Prostate gland (tissue), 2 donors: ENCODE measurements at regions of chr12 and their contacts with region 1.

Region 1: DNA sequence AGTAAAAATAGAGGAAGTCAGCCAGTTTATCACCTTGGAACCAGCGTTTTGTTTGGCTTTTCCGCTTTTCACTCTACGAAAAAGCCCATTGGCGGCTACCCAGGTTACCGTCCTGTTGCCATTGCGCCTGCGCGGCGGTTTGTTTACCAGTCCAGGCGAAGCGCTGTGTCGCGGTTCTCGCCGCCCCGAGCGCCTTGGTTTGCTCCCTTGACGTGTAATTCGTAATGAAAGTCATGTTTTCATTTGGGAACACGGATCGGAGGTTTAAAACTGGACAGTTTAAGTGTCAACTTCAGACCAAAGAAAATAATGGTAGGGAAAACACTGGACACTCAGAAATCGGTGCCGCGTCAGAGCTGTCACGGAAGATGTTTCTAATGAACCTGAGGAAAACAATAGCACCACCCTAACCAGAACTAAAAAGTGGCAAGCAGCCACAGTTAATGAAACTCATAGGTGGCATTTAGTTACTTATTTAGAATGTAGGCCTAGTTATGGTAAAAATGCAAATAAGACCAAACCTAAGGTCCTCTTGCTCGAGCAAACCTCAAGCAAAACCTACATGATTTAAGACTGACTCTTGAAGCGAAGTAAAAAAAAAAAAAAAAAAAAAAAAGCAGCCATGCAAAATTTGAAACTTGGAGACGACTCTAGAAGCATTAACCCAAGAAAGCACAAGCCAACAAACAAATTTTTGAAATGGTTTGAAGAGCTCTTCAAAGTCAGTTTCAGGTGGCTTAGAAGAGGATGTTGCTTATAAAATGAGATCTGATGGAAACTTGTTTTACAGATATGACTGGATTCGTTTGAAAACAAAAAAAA is 790 bp upstream of the GPR19 start:
- DNase-seq: peak; percentile 88
- H3K4me3 ChIP-seq: peak overlapping the region; percentile 35 to 52
- H3K27ac ChIP-seq: peak overlapping the region; percentile 94 to 97
- H3K4me1 ChIP-seq: no peaks in the 10 kb centered on the region
- H3K27me3 ChIP-seq: no peaks in the 10 kb centered on the region
- CTCF ChIP-seq: peak in 1 of 4 experiments; percentile 8
- POLR2A ChIP-seq: peak; percentile 76

Region 2: GRCh38 chr12:12032851-12033588 is 663.8 kb before region 1 on chr12:
- intact Hi-C with region 1: loop called (anchors 10 kb)
- DNase-seq: peak; percentile 84
- H3K4me3 ChIP-seq: peak overlapping the region; percentile 7 to 25
- H3K27ac ChIP-seq: peak overlapping the region; percentile 64 to 70
- H3K4me1 ChIP-seq: peaks cover 4% of the 10 kb centered on the region
- H3K27me3 ChIP-seq: no peaks in the 10 kb centered on the region
- CTCF ChIP-seq: peak; percentile 87 to 95 (median 89)
- POLR2A ChIP-seq: peak; percentile 3

Region 3: GRCh38 chr12:12482959-12483358 is 213.8 kb before region 1 on chr12:
- intact Hi-C with region 1: no loop called
- DNase-seq: no peak
- H3K4me3 ChIP-seq: no peak overlapping the region
- H3K27ac ChIP-seq: peak overlapping the region in 1 of 2 donors; percentile 28
- H3K4me1 ChIP-seq: no peaks in the 10 kb centered on the region
- H3K27me3 ChIP-seq: no peaks in the 10 kb centered on the region
- CTCF ChIP-seq: no peak
- POLR2A ChIP-seq: no peak

Region 4: DNA sequence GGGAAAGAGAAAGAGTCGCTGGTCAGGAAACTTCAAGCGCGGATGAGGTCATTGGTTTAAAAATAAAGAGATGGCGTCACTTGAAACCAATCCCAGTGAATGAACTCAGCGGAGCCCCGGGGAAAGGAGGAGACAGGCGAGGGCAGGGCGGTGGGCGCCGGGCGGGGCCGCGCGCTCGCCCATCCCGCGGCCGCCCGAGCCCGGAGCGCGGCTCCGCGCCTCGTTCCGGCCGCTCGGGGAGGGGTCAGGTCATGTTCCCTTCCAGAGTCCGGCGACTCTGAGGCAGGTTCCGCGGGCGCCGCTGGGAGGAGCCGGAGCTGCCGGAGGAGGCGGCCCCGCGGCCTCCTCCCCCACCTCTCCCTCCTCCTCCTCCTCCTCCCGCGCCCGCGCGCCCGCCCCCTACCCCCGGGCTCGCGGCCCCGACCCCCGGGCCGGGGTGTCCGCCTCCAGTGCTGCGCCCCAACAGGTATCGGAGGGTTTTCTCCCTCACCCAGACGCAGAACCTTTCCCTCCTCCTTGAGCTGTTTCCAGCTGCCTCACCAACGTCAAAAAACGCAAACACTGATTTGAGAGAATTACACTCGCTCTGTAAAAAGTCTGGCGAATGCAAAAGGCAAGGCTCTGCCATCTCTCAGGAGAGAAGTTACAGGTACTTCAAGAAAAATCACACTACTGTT is 134.1 kb before region 1 on chr12 and contains the start of gene DUSP16:
- intact Hi-C with region 1: loop called (anchors 5 kb)
- DNase-seq: peak; percentile 93
- H3K4me3 ChIP-seq: peak within 1 kb of the TSS; percentile 73 to 100
- H3K27ac ChIP-seq: peak within 1 kb of the TSS; percentile 99 to 100
- H3K4me1 ChIP-seq: peaks cover 3% of the 10 kb centered on the region
- H3K27me3 ChIP-seq: no peaks in the 10 kb centered on the region
- CTCF ChIP-seq: peak in 3 of 4 experiments; percentile 18 to 57 (median 46)
- POLR2A ChIP-seq: peak; percentile 78
- total RNA-seq, gene DUSP16: 60.8 to 87.0 TPM

Region 5: GRCh38 chr12:12611512-12612306 is 85.1 kb before region 1 on chr12 and contains the start of gene CREBL2:
- intact Hi-C with region 1: loop called (anchors 10 kb)
- DNase-seq: peak; percentile 92
- H3K4me3 ChIP-seq: peak within 1 kb of the TSS; percentile 47 to 58
- H3K27ac ChIP-seq: peak within 1 kb of the TSS; percentile 90 to 94
- H3K4me1 ChIP-seq: no peaks in the 10 kb centered on the region
- H3K27me3 ChIP-seq: no peaks in the 10 kb centered on the region
- CTCF ChIP-seq: peak in 1 of 4 experiments; percentile 14
- POLR2A ChIP-seq: peak; percentile 55
- total RNA-seq, gene CREBL2: 48.1 to 59.8 TPM

Region 6: GRCh38 chr12:12645485-12645884 is 51.3 kb before region 1 on chr12:
- intact Hi-C with region 1: loop called (anchors 5 kb)
- DNase-seq: no peak
- H3K4me3 ChIP-seq: no peak overlapping the region
- H3K27ac ChIP-seq: no peak overlapping the region
- H3K4me1 ChIP-seq: no peaks in the 10 kb centered on the region
- H3K27me3 ChIP-seq: no peaks in the 10 kb centered on the region
- CTCF ChIP-seq: peak in 2 of 4 experiments; percentile 11 to 29
- POLR2A ChIP-seq: no peak

Region 7: DNA sequence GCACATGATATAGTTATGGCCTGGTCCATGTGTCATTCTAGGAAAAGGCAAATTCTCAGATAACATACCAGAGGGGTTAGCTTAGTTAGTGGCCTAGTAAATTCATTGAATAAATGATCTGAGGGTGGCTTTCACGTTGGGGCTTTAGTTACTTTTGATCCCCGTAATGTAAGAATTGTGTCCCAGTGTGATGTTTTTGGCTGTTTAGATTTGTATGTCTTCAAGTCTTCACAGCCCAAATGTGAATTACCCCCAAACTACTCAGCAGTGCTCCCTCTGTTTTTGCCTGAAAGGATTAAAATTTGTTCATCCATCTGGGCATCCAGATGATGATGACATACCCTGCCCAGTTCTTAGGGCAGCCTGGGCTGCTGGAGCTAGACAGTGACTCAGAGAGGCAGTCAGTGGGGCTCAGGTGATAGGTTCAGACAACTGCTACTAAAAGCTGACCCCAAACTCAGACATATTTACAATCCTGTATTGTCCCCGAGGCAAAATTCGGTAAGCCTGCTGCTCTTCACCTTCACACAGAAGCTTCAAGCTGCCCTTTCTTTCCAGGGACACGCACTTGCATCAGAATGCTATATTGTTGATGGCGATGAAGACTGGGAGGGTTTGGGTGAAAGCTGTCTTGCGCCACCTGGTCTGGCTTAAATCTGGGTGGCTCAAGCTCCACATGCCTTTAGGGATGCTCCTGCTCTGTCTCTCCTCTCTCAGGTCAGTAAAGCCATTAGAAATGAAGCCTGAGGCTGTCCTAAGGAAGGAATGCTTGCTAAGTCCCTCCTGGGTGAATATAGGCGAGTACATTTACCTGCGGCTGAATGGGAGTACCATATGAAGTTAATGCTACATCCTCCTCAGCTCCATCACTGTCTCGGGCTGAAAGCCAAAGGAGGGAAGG is 244.9 kb after region 1 on chr12:
- intact Hi-C with region 1: no loop called
- DNase-seq: no peak
- H3K4me3 ChIP-seq: no peak overlapping the region
- H3K27ac ChIP-seq: no peak overlapping the region
- H3K4me1 ChIP-seq: no peaks in the 10 kb centered on the region
- H3K27me3 ChIP-seq: no peaks in the 10 kb centered on the region
- CTCF ChIP-seq: no peak
- POLR2A ChIP-seq: no peak